ENCODE measurements at regions of chr16 and their contacts with region 1.

Region 1: GRCh38 chr16:88442727-88443576 is 10.1 kb upstream of the ZFPM1 start:
- DNase-seq: peak; percentile 81 to 84 (median 83)
- ATAC-seq: peak; percentile 89 to 96 (median 94)
- H3K4me3 ChIP-seq: no peak overlapping the region
- H3K27ac ChIP-seq: no peak overlapping the region
- H3K4me1 ChIP-seq: peaks cover 0 to 9% (median 4%) of the 10 kb centered on the region in 4 donors
- H3K27me3 ChIP-seq: no peaks in the 10 kb centered on the region
- CTCF ChIP-seq: peak; percentile 95 to 99 (median 97)
- POLR2A ChIP-seq: no peak

Region 2: DNA sequence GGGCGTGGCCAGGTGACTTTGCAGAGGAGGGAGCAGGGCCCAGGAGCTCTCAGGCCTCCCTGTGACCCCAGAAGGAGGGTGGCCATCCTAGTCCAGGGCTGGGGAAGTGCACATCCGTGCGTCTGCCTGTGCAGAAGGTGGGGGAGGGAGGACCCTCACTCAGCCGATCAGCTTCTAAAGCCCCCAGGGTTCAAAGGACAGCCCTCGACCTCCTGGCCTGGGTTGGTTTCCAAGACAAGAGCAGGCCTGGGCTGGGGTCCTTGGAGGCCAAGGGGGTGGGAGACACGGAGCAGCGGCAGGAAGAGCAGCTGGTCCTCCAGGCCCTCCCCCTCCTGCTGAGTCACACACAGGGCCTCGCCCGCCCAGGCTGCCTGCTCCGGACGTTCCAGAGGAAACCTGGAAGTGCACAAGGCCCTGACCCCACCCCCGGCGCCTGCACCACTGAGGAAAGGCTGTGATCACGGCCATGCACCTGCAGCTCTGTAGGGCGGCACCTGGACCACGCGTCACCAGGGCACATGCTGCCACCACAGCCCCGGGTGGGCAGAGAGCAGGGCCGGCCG is 127.3 kb before region 1 on chr16:
- intact Hi-C with region 1: no loop called
- DNase-seq: peak in 1 of 3 donors; percentile 61
- ATAC-seq: peak; percentile 65 to 81 (median 76)
- H3K4me3 ChIP-seq: no peak overlapping the region
- H3K27ac ChIP-seq: no peak overlapping the region
- H3K4me1 ChIP-seq: no peaks in the 10 kb centered on the region
- H3K27me3 ChIP-seq: no peaks in the 10 kb centered on the region
- CTCF ChIP-seq: no peak
- POLR2A ChIP-seq: no peak

Region 3: DNA sequence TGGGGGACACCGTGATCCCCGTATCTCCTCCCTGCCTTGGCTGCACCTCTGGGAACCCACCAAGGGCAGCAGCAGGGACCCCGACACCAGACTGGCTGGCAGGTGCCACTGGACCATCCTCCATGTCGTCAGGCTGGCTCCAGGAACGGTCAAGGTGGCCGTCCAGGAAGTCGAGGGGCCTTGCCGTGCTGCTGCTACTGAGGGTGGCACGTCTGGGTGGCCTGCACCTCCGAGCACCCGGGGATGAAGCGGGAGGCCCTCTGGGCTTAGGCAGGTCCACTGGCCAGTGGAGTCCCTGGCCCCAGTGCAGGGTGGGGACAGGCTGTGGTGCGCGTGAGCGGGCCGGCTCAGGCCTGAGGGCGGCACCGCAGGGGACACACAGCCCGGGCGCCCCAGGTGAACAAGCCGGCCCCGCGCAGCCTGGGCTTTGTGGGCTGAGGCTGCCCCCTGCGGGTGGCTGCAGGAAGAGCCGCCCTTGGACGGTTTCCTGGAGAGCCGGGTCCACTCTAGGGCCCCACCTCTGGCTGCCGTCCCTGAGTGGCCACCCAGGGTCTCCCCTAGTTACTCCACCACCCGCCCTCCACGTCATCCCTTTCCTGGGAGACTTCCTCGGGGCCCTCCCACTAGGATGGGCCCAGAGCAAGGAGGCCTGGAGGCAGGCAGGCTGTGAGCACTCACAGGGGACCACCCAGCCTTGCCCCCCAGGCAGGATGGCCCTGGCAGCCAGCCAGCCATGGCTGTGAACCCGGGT is 84.4 kb after region 1 on chr16:
- intact Hi-C with region 1: loop called (anchors 5 kb)
- DNase-seq: peak in 1 of 3 donors; percentile 64
- ATAC-seq: peak; percentile 64 to 72 (median 68)
- H3K4me3 ChIP-seq: no peak overlapping the region
- H3K27ac ChIP-seq: no peak overlapping the region
- H3K4me1 ChIP-seq: peaks cover 0 to 12% (median 0%) of the 10 kb centered on the region in 4 donors
- H3K27me3 ChIP-seq: no peaks in the 10 kb centered on the region
- CTCF ChIP-seq: peak; percentile 76 to 90 (median 83)
- POLR2A ChIP-seq: no peak

Region 4: DNA sequence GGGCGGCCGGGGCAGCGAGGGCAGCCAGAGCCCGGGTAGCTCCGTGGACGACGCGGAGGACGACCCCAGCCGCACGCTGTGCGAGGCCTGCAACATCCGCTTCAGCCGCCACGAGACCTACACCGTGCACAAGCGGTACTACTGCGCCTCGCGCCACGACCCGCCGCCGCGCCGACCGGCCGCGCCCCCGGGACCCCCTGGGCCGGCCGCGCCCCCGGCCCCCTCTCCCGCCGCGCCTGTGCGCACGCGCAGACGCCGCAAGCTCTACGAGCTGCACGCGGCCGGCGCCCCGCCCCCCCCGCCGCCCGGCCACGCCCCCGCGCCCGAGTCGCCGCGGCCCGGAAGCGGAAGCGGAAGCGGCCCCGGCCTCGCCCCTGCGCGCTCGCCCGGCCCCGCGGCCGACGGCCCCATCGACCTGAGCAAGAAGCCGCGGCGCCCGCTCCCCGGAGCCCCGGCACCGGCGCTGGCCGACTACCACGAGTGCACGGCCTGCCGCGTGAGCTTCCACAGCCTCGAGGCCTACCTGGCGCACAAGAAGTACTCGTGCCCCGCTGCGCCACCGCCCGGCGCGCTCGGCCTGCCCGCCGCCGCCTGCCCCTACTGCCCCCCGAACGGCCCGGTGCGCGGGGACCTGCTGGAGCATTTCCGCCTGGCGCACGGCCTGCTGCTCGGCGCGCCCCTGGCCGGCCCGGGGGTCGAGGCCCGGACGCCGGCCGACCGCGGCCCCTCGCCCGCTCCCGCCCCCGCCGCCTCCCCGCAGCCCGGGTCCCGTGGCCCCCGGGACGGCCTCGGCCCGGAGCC is 91.2 kb after region 1 on chr16:
- intact Hi-C with region 1: loop called (anchors 5 kb)
- DNase-seq: peak in 1 of 3 donors; percentile 57
- ATAC-seq: peak in 1 of 4 donors; percentile 43
- H3K4me3 ChIP-seq: peak overlapping the region in 2 of 3 donors; percentile 27 to 54
- H3K27ac ChIP-seq: peak overlapping the region in 1 of 3 donors; percentile 47
- H3K4me1 ChIP-seq: no peaks in the 10 kb centered on the region
- H3K27me3 ChIP-seq: no peaks in the 10 kb centered on the region
- CTCF ChIP-seq: no peak
- POLR2A ChIP-seq: no peak

Region 5: DNA sequence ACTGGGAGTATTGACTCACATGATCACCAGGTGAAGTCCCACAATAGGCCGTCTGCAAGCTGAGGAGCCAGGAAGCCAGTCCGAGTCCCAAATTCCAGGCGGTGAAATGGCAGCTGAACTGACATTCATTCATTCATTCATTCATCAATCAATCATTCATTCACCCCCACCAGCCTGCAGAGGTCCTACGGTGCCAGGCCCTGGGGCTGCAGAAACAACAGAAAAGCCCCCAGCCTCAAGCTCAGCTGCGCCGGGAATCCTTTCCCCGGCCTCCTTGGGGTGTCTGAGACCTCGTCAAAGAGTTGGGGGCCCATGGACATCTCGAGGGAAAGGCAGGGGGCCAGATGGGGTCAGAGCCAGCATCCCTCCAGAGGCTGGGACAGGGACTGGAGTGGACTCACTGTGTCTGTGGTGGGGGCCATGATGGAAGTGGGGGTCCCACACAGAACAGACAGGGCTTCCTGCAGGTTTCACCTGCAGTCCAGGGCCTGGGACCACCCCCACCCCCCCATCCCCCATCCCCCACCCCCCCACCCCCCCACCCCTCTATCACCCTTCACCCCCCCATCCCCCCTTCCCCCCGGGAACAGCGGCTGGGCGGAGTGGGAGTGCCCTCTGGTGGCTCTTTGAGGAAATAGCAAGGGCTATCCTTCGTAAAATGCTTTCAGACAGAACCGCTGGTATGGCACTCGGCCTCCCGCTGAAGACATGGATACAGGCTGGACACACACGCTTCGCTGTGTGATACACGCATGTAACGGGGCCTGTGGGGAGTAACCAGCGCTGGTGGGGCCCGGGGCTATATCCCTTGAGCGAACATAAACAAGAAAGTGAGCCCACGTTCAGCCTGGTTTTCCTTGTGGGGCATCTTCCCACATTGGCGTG is 118.8 kb after region 1 on chr16:
- intact Hi-C with region 1: loop called in 1 of 2 experiments (anchors 5 kb)
- DNase-seq: peak in 1 of 3 donors; percentile 51
- ATAC-seq: peak; percentile 77 to 88 (median 81)
- H3K4me3 ChIP-seq: no peak overlapping the region
- H3K27ac ChIP-seq: no peak overlapping the region
- H3K4me1 ChIP-seq: peaks cover 0 to 3% (median 0%) of the 10 kb centered on the region in 4 donors
- H3K27me3 ChIP-seq: no peaks in the 10 kb centered on the region
- CTCF ChIP-seq: peak; percentile 51 to 61 (median 58)
- POLR2A ChIP-seq: no peak